Gastrocnemius medialis (tissue), 4 donors: ENCODE measurements at regions of chr12 and their contacts with region 1.

Region 1: GRCh38 chr12:58105225-58106119 is 164.1 kb downstream of the ATP23 start:
- DNase-seq: no peak
- ATAC-seq: peak in 1 of 2 donors; percentile 32
- H3K4me3 ChIP-seq: no peak overlapping the region
- H3K27ac ChIP-seq: peak overlapping the region; percentile 36 to 79 (median 74)
- H3K4me1 ChIP-seq: peaks cover 11 to 22% of the 10 kb centered on the region in 2 donors
- H3K27me3 ChIP-seq: no peaks in the 10 kb centered on the region
- CTCF ChIP-seq: peak in 2 of 5 experiments; percentile 21 to 37
- POLR2A ChIP-seq: no peak

Region 2: GRCh38 chr12:56816491-56816890 is 1289.0 kb before region 1 on chr12:
- in situ Hi-C with region 1: no loop called
- intact Hi-C with region 1: no loop called
- DNase-seq: no peak
- ATAC-seq: no peak
- H3K4me3 ChIP-seq: no peak overlapping the region
- H3K27ac ChIP-seq: no peak overlapping the region
- H3K4me1 ChIP-seq: no peaks in the 10 kb centered on the region
- H3K27me3 ChIP-seq: no peaks in the 10 kb centered on the region
- CTCF ChIP-seq: no peak
- POLR2A ChIP-seq: no peak

Region 3: DNA sequence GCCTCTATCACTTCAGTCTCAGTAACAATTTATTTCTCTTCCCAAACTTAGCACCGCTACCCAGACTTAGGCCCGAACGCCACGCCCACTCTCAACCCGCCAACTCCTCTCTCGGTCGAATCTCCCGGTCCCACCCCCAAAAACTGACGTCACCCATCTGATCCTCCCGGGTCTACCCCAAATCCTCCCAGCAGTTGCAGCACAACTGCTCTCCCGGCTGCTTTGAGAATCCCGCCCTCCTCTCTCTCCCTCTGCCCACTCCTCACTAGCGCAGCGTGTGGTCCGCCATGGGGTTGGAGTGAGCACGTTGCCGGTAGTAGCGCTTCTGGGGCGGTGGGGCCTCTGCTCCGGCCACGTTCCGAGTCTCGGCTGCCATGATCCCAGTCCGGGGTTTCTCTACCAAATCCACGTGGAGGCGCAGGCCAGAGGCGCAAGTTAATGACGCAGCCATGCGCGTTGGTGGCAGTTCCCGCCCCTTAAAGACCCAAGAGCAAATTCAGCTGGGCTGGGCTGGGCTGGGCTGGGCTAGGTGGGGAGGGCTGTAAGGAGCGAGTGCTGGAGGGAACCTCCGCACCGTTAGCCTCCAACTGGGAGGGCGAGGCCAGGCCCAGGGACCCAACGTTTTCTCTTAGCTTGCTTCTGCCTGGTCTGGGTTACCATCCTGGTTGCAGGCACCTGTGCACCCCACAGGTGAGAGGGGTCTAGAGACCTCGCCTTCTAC is 333.6 kb before region 1 on chr12 and contains the start of gene METTL1:
- in situ Hi-C with region 1: no loop called
- intact Hi-C with region 1: no loop called
- DNase-seq: peak; percentile 89 to 92
- ATAC-seq: peak; percentile 92 to 97
- H3K4me3 ChIP-seq: peak within 1 kb of the TSS; percentile 79 to 97 (median 90)
- H3K27ac ChIP-seq: peak within 1 kb of the TSS; percentile 84 to 94 (median 87)
- H3K4me1 ChIP-seq: peaks cover 18 to 20% of the 10 kb centered on the region in 2 donors
- H3K27me3 ChIP-seq: peaks cover 2 to 4% (median 4%) of the 10 kb centered on the region in 3 donors
- CTCF ChIP-seq: no peak
- POLR2A ChIP-seq: peak; percentile 44 to 45
- total RNA-seq, gene METTL1: 6.5 to 22.7 (median 17.9) TPM

Region 4: GRCh38 chr12:58081488-58081887 is 24.0 kb before region 1 on chr12:
- in situ Hi-C with region 1: no loop called
- intact Hi-C with region 1: no loop called
- DNase-seq: no peak
- ATAC-seq: no peak
- H3K4me3 ChIP-seq: no peak overlapping the region
- H3K27ac ChIP-seq: no peak overlapping the region
- H3K4me1 ChIP-seq: peaks cover 8 to 12% of the 10 kb centered on the region in 2 donors
- H3K27me3 ChIP-seq: no peaks in the 10 kb centered on the region
- CTCF ChIP-seq: no peak
- POLR2A ChIP-seq: no peak

Region 5: GRCh38 chr12:58310828-58311622 is 205.6 kb after region 1 on chr12:
- in situ Hi-C with region 1: no loop called
- intact Hi-C with region 1: loop called (anchors 10 kb)
- DNase-seq: no peak
- ATAC-seq: peak; percentile 94 to 99
- H3K4me3 ChIP-seq: peak overlapping the region in 1 of 4 donors; percentile 6
- H3K27ac ChIP-seq: peak overlapping the region; percentile 15 to 52 (median 46)
- H3K4me1 ChIP-seq: peaks cover 15 to 17% of the 10 kb centered on the region in 2 donors
- H3K27me3 ChIP-seq: no peaks in the 10 kb centered on the region
- CTCF ChIP-seq: no peak
- POLR2A ChIP-seq: no peak